AG04450 (cell line): ENCODE measurements at regions of chr12 and their contacts with region 1.

Region 1: DNA sequence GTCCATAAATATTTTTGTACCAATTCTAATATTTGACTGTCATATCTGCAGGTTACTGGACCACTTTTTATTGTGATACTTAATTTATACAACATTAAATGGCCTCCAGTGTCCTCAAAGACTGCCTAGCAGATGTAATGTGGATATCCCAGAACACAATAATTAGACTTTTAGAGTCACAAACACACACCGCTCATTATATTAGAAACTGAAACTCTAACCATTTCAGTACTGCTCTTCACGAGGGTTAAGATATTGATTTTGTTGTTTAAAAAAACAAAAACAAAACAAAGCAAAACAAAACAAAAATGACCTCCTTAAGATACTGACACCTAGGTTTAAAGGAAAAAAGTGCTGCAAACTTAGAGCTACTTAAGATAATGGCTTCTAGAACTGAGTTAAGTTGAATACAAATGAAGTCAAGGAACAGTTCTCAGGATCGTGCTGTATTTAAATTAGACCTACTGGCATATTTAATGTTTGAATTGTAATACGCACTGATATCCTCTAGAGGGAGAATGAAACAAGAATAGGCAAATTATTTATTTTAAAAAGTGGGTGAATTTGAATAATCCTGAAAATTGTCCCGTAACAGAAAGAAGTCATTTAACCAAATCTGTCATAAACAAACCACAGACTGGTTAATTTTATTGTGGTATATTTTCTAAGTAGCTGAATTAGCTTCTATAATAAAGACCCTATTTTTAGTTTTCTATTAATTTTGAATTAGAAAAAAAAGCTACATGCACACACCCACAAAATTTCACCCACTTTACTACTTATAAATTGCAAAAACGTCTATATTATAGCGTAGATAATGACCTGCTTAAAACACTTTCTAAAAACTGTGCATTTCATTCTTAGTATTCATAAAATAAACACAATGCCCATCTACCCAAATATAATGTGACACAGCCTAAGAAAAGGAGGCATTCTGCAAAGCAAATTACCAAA is 395.2 kb upstream of the DCN start:
- DNase-seq: no peak
- H3K4me3 ChIP-seq: peak overlapping the region; percentile 3; the same call in 1 of the 2 replicates
- H3K27ac ChIP-seq: no peak overlapping the region
- H3K27me3 ChIP-seq: no peaks in the 10 kb centered on the region
- CTCF ChIP-seq: peak; percentile 53

Region 2: GRCh38 chr12:91326058-91327027 is 251.5 kb before region 1 on chr12:
- CTCF ChIA-PET with region 1: no interaction called
- POLR2A ChIA-PET with region 1: no interaction called
- DNase-seq: peak; percentile 55
- H3K4me3 ChIP-seq: no peak overlapping the region; the same call in 1 of the 2 replicates
- H3K27ac ChIP-seq: no peak overlapping the region
- H3K27me3 ChIP-seq: no peaks in the 10 kb centered on the region
- CTCF ChIP-seq: peak; percentile 91

Region 3: GRCh38 chr12:91565246-91565645 is 12.6 kb before region 1 on chr12:
- CTCF ChIA-PET with region 1: interaction called, 16 read pairs
- POLR2A ChIA-PET with region 1: no interaction called
- DNase-seq: no peak
- H3K4me3 ChIP-seq: no peak overlapping the region
- H3K27ac ChIP-seq: no peak overlapping the region
- H3K27me3 ChIP-seq: no peaks in the 10 kb centered on the region
- CTCF ChIP-seq: no peak

Region 4: DNA sequence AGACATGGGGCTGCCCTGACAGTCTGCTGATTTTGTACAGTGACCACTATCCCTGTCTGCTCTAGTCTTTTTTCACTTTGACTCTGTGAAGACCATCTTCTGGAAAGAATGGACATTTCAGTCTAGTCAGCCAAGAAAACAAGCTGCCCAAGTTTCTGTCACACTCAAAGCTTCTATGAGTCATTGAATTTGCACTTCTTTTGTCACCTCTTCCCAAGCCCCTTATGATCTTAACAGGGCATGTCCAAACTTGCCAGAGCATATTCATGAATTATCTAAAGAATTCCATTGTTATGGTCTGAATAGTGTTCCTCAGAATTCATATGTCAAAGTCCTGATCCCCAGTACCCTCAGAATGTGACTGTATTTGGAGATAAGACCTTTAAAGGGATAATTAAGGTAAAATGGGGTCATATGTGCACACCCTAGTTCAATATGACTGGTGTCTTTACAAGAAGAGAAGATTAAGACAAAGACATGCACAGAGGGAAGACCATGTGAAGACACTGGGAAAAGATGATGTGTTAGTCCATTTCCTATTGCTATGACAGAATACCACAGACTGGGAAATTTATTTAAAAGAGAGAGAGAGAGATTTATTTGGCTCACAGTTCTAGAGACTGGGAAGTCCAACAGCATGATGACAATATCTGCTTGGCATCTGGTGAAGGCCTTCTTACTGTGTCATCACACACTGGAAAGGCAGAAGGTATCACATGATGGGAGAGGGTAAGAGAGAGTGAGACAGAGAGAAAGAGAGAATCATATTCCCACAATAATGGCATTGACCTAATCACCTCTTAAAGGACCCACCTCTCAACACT is 325.2 kb after region 1 on chr12:
- CTCF ChIA-PET with region 1: no interaction called
- POLR2A ChIA-PET with region 1: no interaction called
- DNase-seq: no peak
- H3K4me3 ChIP-seq: no peak overlapping the region
- H3K27ac ChIP-seq: no peak overlapping the region
- H3K27me3 ChIP-seq: no peaks in the 10 kb centered on the region
- CTCF ChIP-seq: no peak